ENCODE measurements at regions of chr2 and their contacts with region 1.

Region 1: DNA sequence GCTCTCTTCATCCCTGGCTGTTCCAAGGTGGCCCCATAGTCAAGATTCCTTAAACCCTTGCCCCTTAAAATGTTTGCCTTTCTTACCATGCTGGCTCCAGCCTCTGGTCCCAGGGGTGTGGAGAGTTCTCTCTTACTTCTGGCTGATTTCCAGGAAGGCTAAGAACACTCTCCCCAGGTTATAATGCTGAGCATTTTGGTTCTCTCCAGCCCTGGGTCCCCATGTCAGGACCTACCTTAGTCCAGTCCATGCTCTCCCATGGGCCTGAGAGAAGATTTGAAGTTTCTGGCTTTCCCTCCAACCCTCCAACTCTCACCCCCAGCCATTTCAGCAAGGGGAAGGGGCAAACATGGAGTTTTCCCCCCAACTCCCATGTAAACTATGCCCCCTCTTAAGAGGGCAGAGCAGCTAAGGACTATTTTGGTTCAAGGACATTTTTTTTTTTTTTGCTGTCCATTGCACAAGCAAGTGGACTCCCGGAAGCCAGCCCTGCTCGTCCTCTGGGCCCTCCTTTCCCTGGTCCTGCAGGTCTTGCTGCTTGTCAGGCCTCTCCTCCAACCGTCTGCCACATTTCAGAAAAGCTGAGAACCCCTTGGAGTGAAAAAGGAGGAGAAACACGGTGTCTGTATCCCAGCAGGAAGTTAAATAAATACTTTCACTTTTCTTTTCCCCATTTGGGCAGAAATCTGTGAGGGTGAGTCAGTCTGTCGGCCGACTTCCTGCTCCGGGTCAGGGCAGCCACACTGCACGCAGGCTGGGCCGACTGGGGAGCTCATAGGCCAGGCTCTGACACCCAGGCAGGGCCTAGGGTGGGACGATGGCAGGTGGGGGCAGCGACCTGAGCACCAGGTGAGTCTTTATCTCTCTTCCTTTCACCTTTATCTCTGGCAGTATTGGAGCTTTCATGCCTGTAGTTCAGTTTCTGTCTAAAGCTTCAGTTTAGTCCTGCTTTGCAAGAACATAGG is at the start of gene SP140L:
- DNase-seq: peak; percentile 56 to 91 (median 82)
- ATAC-seq: peak; percentile 100
- H3K4me3 ChIP-seq: peak within 1 kb of the TSS; percentile 63 to 80
- H3K4me3 Mint-ChIP-seq: peak within 1 kb of the TSS; percentile 96
- H3K27ac ChIP-seq: peak within 1 kb of the TSS; percentile 88 to 90
- H3K27ac Mint-ChIP-seq: peak within 1 kb of the TSS; percentile 99
- H3K4me1 ChIP-seq: peaks cover 44% of the 10 kb centered on the region
- H3K4me1 Mint-ChIP-seq: peaks cover 80% of the 10 kb centered on the region
- H3K27me3 ChIP-seq: no peaks in the 10 kb centered on the region
- H3K27me3 Mint-ChIP-seq: no peaks in the 10 kb centered on the region
- CTCF ChIP-seq: no peak
- total RNA-seq, gene SP140L: 69.8 to 70.5 TPM

Region 2: DNA sequence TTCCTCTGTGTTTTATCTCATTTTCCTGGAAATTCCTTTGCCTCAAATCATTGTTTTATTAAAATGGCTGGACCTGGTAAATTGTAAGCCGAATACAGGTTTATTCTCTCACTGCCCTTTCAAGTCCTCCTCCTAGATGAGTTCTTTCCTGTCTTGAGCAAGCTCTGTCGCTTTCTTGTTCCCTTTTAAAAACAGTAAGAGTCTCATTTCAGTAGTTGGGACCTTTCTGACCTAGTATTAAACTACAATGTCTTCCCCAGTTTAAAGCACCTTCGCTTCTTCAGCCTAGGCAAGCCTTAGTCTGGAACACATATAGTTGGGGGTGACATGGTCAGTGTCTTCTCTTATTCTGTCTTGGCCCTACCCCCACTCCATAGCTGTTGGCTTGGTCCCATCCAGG is 40.7 kb before region 1 on chr2:
- CTCF ChIA-PET with region 1: no interaction called
- POLR2A ChIA-PET with region 1: no interaction called
- intact Hi-C with region 1: loop called in 1 of 2 experiments (anchors 5 kb)
- DNase-seq: no peak
- ATAC-seq: no peak
- H3K4me3 ChIP-seq: no peak overlapping the region
- H3K4me3 Mint-ChIP-seq: no peak overlapping the region
- H3K27ac ChIP-seq: no peak overlapping the region
- H3K27ac Mint-ChIP-seq: no peak overlapping the region
- H3K4me1 ChIP-seq: no peaks in the 10 kb centered on the region
- H3K4me1 Mint-ChIP-seq: peaks cover 9% of the 10 kb centered on the region
- H3K27me3 ChIP-seq: no peaks in the 10 kb centered on the region
- H3K27me3 Mint-ChIP-seq: no peaks in the 10 kb centered on the region
- CTCF ChIP-seq: no peak

Region 3: DNA sequence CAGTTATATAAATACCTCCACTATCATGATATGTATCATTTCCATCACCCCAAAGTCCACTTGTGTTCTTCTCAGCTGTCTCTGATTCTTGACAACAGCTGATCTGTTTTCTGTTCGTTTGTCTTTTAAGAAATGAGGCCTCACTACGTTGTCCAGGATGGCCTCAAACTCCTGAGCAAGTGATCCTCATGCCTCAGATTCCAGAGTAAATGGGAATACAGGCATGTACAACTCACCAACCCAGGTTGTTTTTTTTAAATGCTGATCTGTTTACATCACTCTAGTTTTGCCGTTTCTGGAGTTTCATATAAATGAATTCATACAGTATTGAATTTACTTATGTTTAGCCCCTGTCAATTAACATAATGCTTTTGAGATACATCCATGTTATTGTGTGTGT is 50.3 kb after region 1 on chr2:
- CTCF ChIA-PET with region 1: no interaction called
- POLR2A ChIA-PET with region 1: no interaction called
- intact Hi-C with region 1: loop called in 1 of 2 experiments (anchors 5 kb)
- DNase-seq: no peak
- ATAC-seq: no peak
- H3K4me3 ChIP-seq: no peak overlapping the region
- H3K4me3 Mint-ChIP-seq: no peak overlapping the region
- H3K27ac ChIP-seq: no peak overlapping the region
- H3K27ac Mint-ChIP-seq: no peak overlapping the region
- H3K4me1 ChIP-seq: no peaks in the 10 kb centered on the region
- H3K4me1 Mint-ChIP-seq: peaks cover 12% of the 10 kb centered on the region
- H3K27me3 ChIP-seq: no peaks in the 10 kb centered on the region
- H3K27me3 Mint-ChIP-seq: no peaks in the 10 kb centered on the region
- CTCF ChIP-seq: no peak

Region 4: DNA sequence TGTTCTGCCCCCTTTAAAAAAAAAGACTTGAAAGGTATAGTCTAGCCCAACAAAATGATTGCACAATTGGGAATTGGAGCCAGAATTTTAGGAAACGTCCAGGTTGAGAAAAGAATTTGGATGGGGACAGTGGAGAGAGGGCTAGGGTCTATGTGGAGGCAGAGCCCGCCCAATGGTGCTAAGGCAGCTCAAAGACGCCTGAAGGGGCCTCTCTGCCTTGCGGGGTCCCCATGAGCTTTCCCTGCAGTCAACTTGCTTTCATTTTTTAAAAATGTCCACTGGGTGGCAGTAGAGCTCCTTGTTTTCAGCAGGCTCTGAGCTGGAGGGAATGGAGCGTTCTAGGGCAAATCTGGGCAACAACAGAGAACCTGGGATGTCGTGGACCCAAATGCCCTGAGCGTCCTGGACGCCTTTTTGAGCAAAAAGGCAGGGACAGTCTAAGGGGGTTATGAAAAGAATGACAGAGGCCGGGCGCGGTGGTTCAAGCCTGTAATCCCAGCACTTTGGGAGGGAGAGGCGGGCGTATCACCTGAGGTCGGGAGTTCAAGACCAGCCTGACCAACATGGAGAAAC is 497.8 kb after region 1 on chr2:
- CTCF ChIA-PET with region 1: no interaction called
- POLR2A ChIA-PET with region 1: no interaction called
- intact Hi-C with region 1: no loop called
- DNase-seq: peak; percentile 17 to 88 (median 55)
- ATAC-seq: peak; percentile 90
- H3K4me3 ChIP-seq: no peak overlapping the region
- H3K4me3 Mint-ChIP-seq: peak overlapping the region; percentile 64
- H3K27ac ChIP-seq: no peak overlapping the region
- H3K27ac Mint-ChIP-seq: no peak overlapping the region
- H3K4me1 ChIP-seq: peaks cover 5% of the 10 kb centered on the region
- H3K4me1 Mint-ChIP-seq: peaks cover 7% of the 10 kb centered on the region
- H3K27me3 ChIP-seq: peaks cover 11 to 12% of the 10 kb centered on the region in 2 experiments
- H3K27me3 Mint-ChIP-seq: peaks cover 29% of the 10 kb centered on the region
- CTCF ChIP-seq: peak; percentile 83

Region 5: DNA sequence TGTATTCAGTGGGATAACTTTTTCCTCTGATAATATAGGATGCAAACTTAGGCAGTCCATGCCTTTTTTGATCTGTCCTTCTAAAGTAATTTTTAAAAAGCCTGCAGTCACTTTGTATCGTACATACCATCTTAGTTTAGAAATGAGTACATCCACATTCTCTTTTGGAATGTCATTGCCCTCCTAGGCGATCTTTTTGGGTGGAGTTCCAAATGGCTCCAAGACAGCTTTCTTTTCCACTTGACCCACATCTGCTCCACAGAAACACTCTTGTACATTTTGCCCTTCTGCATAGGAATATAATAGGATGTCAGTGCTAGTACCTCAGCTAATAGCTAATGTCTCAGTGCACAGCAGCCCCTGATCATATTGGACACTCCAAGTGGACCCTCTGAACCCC is 819.9 kb after region 1 on chr2:
- CTCF ChIA-PET with region 1: no interaction called
- POLR2A ChIA-PET with region 1: no interaction called
- intact Hi-C with region 1: no loop called
- DNase-seq: no peak
- ATAC-seq: no peak
- H3K4me3 ChIP-seq: no peak overlapping the region
- H3K4me3 Mint-ChIP-seq: no peak overlapping the region
- H3K27ac ChIP-seq: no peak overlapping the region
- H3K27ac Mint-ChIP-seq: no peak overlapping the region
- H3K4me1 ChIP-seq: no peaks in the 10 kb centered on the region
- H3K4me1 Mint-ChIP-seq: no peaks in the 10 kb centered on the region
- H3K27me3 ChIP-seq: no peaks in the 10 kb centered on the region
- H3K27me3 Mint-ChIP-seq: no peaks in the 10 kb centered on the region
- CTCF ChIP-seq: no peak

Measured in CD8-positive, alpha-beta T cell (primary cell).